ENCODE measurements at regions of chr22 and their contacts with region 1.

Region 1: GRCh38 chr22:22959147-22959827 is 71.7 kb downstream of the IGLL5 start:
- DNase-seq: peak; percentile 75
- H3K4me3 Mint-ChIP-seq: no peak overlapping the region
- H3K27ac Mint-ChIP-seq: no peak overlapping the region
- H3K4me1 Mint-ChIP-seq: no peaks in the 10 kb centered on the region
- H3K27me3 Mint-ChIP-seq: peaks cover 39% of the 10 kb centered on the region

Region 2: GRCh38 chr22:22802339-22802970 is 156.8 kb before region 1 on chr22:
- CTCF ChIA-PET with region 1: interaction called, 45 read pairs
- POLR2A ChIA-PET with region 1: interaction called, 3 read pairs
- DNase-seq: peak; percentile 55
- H3K4me3 Mint-ChIP-seq: no peak overlapping the region
- H3K27ac Mint-ChIP-seq: no peak overlapping the region
- H3K4me1 Mint-ChIP-seq: peaks cover 4% of the 10 kb centered on the region
- H3K27me3 Mint-ChIP-seq: peaks cover 13% of the 10 kb centered on the region

Region 3: DNA sequence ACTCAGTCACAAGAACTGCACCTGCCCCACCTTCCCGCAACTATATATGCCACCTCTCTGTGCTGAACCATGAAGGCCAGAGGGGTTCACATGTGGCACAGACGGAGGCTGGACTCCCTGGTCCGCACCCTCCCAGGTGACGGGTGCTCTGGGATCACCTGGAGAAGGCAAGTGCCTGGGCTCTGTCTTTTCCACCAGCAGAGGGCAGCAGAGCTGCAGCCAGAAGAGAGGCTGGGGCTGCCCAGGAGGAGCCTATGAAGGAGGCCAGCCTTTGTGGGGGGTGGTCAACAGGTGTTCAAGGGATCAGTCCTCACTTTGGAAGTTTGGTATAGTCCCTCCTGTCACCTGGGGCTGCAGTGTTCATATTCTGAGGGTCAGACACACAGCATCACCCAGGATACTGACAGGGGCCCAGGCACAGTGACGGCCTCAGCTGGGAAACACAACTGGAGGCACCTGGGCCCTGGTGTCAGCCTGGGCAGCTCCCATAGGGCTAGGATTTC is 110.9 kb before region 1 on chr22:
- CTCF ChIA-PET with region 1: interaction called, 54 read pairs
- POLR2A ChIA-PET with region 1: no interaction called
- DNase-seq: peak; percentile 74
- H3K4me3 Mint-ChIP-seq: no peak overlapping the region
- H3K27ac Mint-ChIP-seq: no peak overlapping the region
- H3K4me1 Mint-ChIP-seq: peaks cover 7% of the 10 kb centered on the region
- H3K27me3 Mint-ChIP-seq: peaks cover 28% of the 10 kb centered on the region

Region 4: DNA sequence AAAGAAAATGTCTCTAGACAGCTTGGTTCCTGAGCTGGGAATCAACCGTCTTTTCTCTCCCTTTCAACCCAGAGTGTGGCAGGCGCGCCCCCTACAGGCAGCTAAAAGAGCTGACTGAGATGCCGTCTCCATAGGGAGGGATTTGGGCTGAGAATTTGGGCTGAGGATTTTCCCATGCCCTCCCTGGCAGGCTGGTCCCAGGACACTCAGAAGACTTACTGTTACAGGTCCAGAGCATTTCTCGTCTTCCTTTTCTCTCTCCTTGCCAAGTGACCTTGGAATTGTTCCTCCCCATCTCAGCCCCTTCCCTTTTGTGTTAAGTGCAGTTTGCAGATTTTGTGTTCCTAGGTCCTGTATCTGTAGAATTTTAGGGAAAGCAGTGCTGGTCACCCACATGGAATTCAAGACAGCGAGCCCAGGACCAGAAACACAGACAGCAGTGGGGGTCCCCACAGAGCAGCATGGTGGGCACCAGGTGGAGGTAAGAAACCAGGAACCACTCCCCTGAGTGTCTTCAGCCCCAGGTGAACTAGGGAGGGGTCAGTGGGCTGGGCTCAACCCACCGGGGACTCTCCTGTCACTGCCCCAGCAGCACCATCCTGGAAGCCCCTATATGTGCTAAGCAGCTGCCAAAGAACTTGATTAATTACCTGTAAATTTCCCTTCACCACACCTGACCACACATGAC is 81.6 kb before region 1 on chr22:
- CTCF ChIA-PET with region 1: interaction called, 48 read pairs
- POLR2A ChIA-PET with region 1: no interaction called
- DNase-seq: peak; percentile 78
- H3K4me3 Mint-ChIP-seq: no peak overlapping the region
- H3K27ac Mint-ChIP-seq: no peak overlapping the region
- H3K4me1 Mint-ChIP-seq: no peaks in the 10 kb centered on the region
- H3K27me3 Mint-ChIP-seq: peaks cover 23% of the 10 kb centered on the region

Region 5: DNA sequence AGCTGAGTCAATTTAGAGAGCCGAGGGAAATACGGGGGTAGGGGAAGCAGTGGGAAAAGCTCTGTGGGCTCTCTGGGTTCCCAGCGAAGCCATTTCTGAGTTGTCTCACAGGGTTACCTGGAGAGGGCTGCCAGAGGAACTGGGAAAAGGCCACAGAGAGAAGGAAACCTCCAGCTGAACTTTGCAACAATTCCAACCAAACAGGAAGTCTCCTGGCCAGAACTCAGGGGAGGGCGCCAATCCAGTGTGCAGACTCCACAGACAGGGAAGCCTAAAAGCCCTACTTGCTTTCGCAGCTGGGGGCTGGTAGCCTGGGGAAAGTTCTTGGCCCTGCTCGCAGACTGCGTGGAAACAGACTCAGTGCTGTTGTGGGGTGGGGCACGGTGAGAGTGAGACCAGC is 88.0 kb after region 1 on chr22:
- CTCF ChIA-PET with region 1: no interaction called
- POLR2A ChIA-PET with region 1: no interaction called
- DNase-seq: no peak
- H3K4me3 Mint-ChIP-seq: no peak overlapping the region
- H3K27ac Mint-ChIP-seq: no peak overlapping the region
- H3K4me1 Mint-ChIP-seq: no peaks in the 10 kb centered on the region
- H3K27me3 Mint-ChIP-seq: peaks cover 54% of the 10 kb centered on the region

Region 6: DNA sequence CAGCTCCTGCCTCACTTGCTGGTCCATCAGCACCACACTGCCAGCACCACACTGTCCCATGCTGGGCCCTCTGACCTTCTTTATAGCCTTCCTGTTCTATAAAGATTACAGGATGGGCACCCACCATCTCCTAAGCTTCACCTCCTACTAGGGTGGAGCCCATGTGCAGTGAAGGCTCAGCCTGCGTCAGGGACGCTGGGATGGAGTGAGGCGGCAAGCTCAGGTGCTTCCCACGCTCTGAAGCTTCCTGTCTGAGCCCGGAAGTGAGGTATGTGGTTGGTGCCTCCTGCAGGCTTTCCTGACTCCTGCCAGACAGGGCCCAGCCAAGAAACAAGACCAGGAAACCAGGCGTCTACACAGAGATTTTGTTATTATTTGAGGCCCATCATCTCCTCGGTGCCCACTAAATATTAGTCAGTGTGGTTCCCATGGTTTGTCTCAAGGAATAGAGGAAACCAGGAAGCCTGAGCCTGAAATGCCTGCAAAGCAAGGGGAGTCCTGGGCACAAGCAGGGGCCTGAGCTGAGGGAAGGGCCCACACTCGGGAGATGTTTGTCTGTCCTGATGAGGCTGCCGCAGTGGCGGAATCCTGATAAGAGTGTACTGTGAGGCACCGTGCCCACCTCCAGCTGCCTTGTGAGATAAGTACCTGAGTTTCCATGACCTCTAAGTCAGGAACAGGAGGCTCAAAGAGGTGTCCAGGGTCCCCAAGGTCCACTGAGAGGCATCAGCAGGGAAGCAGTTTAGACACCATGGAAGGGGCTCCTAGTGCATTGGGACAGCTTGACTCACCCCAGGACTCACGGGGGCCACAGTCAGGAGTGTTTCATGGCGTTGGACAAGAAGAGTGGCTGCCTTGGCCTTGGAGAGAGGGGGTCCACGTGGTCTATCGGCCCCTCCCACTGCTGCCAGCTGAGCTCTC is 160.5 kb after region 1 on chr22:
- CTCF ChIA-PET with region 1: interaction called, 11 read pairs
- POLR2A ChIA-PET with region 1: no interaction called
- DNase-seq: peak; percentile 54
- H3K4me3 Mint-ChIP-seq: no peak overlapping the region
- H3K27ac Mint-ChIP-seq: peak overlapping the region; percentile 26
- H3K4me1 Mint-ChIP-seq: peaks cover 12% of the 10 kb centered on the region
- H3K27me3 Mint-ChIP-seq: no peaks in the 10 kb centered on the region

Measured in activated CD4-positive, alpha-beta memory T cell treated with anti-CD3 and anti-CD28 coated beads, Interleukin-2, amount 10 ng/mL, durations not matched to agents 7 days and 5 days (primary cell).